Activated CD4-positive, alpha-beta memory T cell treated with anti-CD3 and anti-CD28 coated beads, Interleukin-2, amount 10 ng/mL, durations not matched to agents 7 days and 5 days (primary cell): ENCODE measurements at regions of chr4 and their contacts with region 1.

Region 1: DNA sequence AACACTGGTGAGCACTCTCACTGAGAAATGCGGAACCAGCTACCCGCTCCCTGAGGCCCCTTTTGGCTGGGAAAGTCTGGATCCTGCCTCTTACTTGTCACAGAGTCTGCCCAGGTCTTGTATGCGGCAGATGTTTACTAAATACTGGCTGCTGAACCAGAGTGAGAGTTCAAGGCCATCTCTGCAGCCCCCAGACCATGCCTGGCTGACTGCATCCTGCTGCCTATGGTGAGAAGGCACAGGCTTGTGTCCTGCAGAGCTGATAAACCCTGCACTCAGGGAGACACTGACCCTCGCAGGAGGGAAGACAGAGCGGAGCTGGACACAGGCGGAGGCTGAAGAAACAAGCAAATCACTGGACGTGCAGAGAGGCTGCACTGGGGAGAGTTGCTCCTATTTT is 46.5 kb downstream of the JAKMIP1 start:
- DNase-seq: no peak
- H3K4me3 Mint-ChIP-seq: no peak overlapping the region
- H3K27ac Mint-ChIP-seq: peak overlapping the region; percentile 74
- H3K4me1 Mint-ChIP-seq: peaks cover 78% of the 10 kb centered on the region
- H3K27me3 Mint-ChIP-seq: no peaks in the 10 kb centered on the region

Region 2: DNA sequence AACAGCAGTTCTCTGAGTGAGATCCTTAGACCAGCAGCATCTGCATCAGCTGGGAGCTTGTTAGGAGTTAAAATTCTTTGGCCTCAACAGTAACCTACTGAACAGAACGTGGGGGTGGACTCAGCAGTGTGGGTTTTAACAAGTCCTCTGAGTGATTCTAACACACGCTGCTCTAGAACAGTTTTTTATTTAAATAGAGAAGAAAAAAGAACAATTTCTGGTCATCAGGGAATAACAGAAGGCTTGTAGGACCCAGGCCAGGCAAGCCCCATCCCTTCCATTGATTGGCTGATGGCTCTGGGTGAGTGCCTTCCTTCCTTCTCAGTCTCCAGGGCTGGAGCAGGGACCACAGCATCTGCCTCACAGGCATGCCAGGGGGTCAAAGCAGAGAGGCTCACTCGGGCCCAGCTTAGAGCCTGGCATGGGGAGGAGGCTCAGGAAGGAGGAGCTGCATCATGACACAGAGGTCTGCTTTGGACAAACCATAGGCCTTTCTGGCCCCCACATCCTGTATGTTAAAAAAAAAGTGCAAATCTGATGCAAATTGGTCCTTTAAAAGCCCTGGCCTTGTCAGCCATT is 10.2 kb before region 1 on chr4:
- CTCF ChIA-PET with region 1: interaction called, 5 read pairs
- POLR2A ChIA-PET with region 1: interaction called, 12 read pairs
- DNase-seq: no peak
- H3K4me3 Mint-ChIP-seq: no peak overlapping the region
- H3K27ac Mint-ChIP-seq: no peak overlapping the region
- H3K4me1 Mint-ChIP-seq: peaks cover 21% of the 10 kb centered on the region
- H3K27me3 Mint-ChIP-seq: no peaks in the 10 kb centered on the region